SK-N-SH (cell line): ENCODE measurements at regions of chr7 and their contacts with region 1.

Region 1: GRCh38 chr7:80018941-80019752 is 115.5 kb upstream of the GNAI1 start:
- DNase-seq: peak; percentile 80
- H3K4me3 ChIP-seq: no peak overlapping the region
- H3K27ac ChIP-seq: peak overlapping the region in 1 of 2 experiments; percentile 23; a peak in 1 of 4 replicates
- H3K4me1 ChIP-seq: peaks cover 0 to 2% of the 10 kb centered on the region in 2 experiments; a peak in 2 of 4 replicates
- H3K27me3 ChIP-seq: no peaks in the 10 kb centered on the region
- CTCF ChIP-seq: peak; percentile 100
- EP300 ChIP-seq: no peak
- RAD21 ChIP-seq: peak; percentile 95

Region 2: DNA sequence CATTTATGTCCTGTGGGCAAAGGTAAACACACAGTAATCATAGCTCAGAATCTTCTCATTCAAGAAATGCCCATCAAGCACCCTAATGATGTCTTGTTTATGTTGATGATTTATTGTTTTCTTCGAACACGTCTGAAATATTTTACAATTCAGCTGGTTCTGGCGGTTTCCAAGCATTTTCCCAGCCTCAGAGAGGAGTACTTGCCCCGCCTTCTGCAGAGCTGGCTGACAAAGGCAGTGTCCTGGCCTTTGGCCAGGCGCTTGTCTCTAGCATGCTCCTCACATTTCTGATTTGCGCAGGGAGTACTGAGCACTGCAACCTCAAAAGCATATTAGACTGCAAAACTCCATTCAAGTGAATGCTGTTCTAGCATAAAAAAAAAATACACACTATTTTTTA is 198.8 kb before region 1 on chr7:
- CTCF ChIA-PET with region 1: interaction called, 12 read pairs
- POLR2A ChIA-PET with region 1: no interaction called
- DNase-seq: peak; percentile 52
- H3K4me3 ChIP-seq: peak overlapping the region; percentile 7 to 34
- H3K27ac ChIP-seq: peak overlapping the region; percentile 12 to 94; a peak in 3 of 4 replicates
- H3K4me1 ChIP-seq: peaks cover 0 to 34% of the 10 kb centered on the region in 2 experiments; a peak in 2 of 4 replicates
- H3K27me3 ChIP-seq: no peaks in the 10 kb centered on the region
- CTCF ChIP-seq: no peak
- EP300 ChIP-seq: peak; percentile 23 to 53; a peak in 2 of 4 replicates
- RAD21 ChIP-seq: peak; percentile 58

Region 3: DNA sequence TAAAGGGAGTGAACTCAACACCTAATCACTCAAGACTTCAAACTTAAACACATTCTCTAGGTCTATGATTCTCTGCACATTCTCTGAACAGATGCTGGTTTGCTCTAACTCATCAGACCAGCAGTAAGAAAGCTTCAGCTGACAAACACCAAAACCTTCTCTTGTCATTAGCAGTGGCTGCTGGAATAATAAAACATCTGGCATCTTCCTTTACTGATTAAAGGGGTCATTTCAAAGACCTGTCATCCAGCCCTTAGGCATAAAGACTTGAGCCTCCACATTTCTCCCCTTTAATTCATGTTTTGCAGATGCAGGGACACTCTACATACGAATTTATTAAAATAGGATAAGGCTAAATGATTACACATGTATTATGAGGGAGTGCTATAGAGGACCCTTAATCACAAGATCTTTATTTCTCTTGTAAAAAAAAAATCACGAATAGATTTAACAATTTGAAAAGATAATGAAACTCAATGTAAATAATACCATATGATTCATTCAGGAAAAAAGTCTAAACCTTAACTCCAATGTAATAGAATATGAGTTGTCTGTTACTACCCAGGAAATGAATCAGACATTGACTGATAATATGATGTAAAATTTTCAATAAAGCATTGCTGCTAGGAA is 36.9 kb before region 1 on chr7:
- CTCF ChIA-PET with region 1: no interaction called
- POLR2A ChIA-PET with region 1: no interaction called
- DNase-seq: peak; percentile 78
- H3K4me3 ChIP-seq: peak overlapping the region in 1 of 2 experiments; percentile 10; a peak in 1 of 4 replicates
- H3K27ac ChIP-seq: peak overlapping the region; percentile 72 to 73
- H3K4me1 ChIP-seq: peaks cover 23 to 31% of the 10 kb centered on the region in 2 experiments; a peak in 2 of 4 replicates
- H3K27me3 ChIP-seq: no peaks in the 10 kb centered on the region
- CTCF ChIP-seq: no peak
- EP300 ChIP-seq: peak; percentile 53 to 93; a peak in 3 of 4 replicates
- RAD21 ChIP-seq: peak; percentile 17; the same call in 1 of the 2 replicates

Region 4: DNA sequence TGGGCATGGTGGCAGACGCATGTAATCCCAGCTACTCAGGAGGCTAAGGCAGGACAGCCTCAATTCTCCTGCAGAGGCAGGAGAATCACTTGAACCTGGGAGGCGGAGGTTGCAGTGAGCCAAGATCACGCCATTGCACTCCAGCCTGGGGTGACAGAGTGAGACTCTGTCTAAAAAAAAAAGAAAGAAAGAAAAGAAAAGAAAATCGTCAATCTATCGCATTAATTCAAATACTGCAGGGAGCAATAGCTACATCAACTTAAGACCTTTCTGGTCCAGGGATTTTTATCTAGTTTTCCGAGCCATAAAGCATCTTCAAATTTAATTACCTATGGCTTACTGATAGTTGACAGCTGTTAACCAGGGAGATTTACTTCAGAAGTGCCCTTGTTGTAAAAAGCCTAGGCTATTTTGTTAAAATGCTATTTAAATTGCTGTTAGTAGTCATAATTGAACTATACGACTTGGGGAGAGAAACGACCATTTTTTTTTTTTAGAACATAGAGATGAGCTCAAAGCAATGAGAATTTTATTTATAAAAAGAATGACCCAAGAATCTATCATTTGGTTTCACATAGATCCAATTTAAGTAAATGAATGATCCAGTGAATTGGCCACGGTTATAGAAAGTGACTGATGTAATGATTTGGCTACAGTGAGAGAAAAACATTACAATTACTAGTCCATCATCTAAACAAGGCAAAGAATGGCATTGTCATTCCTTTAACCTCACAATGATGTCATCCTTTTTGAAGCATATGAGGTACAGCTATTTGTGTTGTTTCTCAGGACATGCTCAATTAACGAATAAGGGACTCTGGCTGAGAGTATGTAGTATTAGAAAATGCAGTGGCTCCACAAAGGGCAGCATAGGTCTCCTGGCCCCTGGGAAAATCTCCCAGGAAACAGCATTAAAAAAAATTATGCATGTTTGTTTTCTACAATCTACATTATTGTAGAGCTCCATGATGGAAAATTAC is 814.4 kb after region 1 on chr7:
- CTCF ChIA-PET with region 1: no interaction called
- POLR2A ChIA-PET with region 1: no interaction called
- DNase-seq: no peak
- H3K4me3 ChIP-seq: no peak overlapping the region
- H3K27ac ChIP-seq: peak overlapping the region; percentile 35 to 70
- H3K4me1 ChIP-seq: peaks cover 29 to 35% of the 10 kb centered on the region in 2 experiments
- H3K27me3 ChIP-seq: no peaks in the 10 kb centered on the region
- CTCF ChIP-seq: no peak
- EP300 ChIP-seq: no peak
- RAD21 ChIP-seq: no peak